ENCODE measurements at regions of chr3 and their contacts with region 1.

Region 1: GRCh38 chr3:77038468-77038929 is 1.4 kb upstream of the ROBO2 start:
- DNase-seq: peak; percentile 70
- H3K4me3 ChIP-seq: peak overlapping the region; percentile 64
- H3K27ac ChIP-seq: no peak overlapping the region
- H3K27me3 ChIP-seq: peaks cover 8% of the 10 kb centered on the region
- CTCF ChIP-seq: peak; percentile 76

Region 2: DNA sequence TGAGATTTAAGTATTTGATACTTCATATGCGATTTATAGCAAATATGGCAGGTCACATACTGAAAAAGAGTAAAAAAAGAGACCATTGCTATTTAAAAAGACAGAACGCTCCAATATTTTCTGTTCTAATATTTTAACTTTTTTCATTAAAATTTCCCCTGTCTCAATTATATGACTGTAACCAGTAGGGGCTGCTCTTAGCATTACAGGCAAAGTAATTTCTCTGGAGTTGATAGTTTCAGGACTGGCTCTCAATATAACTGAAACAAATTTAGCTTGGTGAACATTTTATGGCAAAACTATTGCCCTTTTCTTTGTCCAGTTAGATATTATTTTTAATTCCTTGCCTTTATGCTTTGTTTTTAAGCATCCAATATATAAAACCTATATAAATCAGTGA is 284.9 kb before region 1 on chr3:
- CTCF ChIA-PET with region 1: interaction called, 12 read pairs
- POLR2A ChIA-PET with region 1: no interaction called
- DNase-seq: no peak
- H3K4me3 ChIP-seq: no peak overlapping the region
- H3K27ac ChIP-seq: no peak overlapping the region
- H3K27me3 ChIP-seq: no peaks in the 10 kb centered on the region
- CTCF ChIP-seq: peak; percentile 62

Region 3: GRCh38 chr3:76900596-76900995 is 137.9 kb before region 1 on chr3:
- CTCF ChIA-PET with region 1: no interaction called
- POLR2A ChIA-PET with region 1: no interaction called
- DNase-seq: peak; percentile 2
- H3K4me3 ChIP-seq: no peak overlapping the region
- H3K27ac ChIP-seq: no peak overlapping the region
- H3K27me3 ChIP-seq: no peaks in the 10 kb centered on the region
- CTCF ChIP-seq: no peak

Region 4: DNA sequence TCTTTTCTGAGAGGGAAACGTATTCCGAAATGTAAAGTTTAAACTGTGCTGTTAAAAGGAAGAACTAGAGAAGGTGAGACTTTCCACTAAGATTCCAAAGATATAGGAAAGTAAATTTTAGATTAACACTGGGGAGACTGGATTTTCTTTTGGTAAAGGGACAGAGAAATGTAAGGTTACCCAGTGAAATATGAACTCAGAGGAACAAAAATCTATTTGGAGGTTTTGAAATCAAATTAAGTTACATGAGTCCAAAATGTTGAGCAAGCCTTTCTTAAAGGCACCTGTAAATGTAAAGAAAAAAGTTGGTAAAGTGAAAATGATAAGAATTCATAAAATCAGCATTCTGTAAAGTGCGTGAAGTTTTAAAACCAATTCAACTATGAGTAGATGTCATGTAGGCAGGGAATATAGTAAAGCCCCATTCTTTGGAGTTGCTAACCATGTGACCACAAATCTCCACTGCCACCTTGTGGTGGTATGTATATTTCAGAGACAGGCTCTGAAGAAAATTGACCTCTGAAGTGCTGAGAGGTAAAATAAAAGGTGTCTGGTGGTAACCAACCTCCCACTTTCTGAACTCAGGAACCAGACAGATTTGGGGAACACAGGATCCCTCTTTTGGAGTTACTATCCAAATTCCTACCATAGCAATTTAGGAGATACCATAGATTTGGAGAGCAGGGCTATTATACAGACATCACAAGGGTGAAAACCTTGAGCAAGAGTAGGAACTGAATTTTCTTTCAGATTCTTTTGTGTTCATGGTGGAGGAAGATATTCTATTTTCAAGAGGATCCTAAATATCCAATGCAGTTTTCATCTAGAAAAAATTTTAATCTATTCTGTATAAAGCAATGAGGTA is 216.7 kb after region 1 on chr3:
- CTCF ChIA-PET with region 1: interaction called, 27 read pairs
- POLR2A ChIA-PET with region 1: no interaction called
- DNase-seq: peak; percentile 37
- H3K4me3 ChIP-seq: no peak overlapping the region
- H3K27ac ChIP-seq: no peak overlapping the region
- H3K27me3 ChIP-seq: no peaks in the 10 kb centered on the region
- CTCF ChIP-seq: peak; percentile 74

Region 5: DNA sequence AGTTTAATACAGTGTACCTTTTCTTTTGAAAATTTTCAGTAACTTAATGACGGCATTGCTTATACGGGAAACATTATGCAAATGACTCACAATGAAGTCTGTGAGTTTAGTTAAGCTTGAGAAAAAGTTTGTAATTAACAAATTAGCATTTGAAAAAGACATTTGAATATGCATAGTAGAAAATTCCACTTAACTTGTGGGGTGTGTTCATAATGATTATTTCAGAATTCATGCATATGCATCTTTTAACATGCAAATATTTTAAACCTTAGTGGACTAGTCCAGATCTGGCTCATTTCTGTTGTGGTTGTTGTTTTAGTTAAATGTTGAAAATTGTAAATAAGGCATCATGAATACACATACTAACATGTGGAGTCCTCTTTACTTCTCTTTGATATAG is 240.8 kb after region 1 on chr3:
- CTCF ChIA-PET with region 1: no interaction called
- POLR2A ChIA-PET with region 1: no interaction called
- DNase-seq: no peak
- H3K4me3 ChIP-seq: no peak overlapping the region
- H3K27ac ChIP-seq: no peak overlapping the region
- H3K27me3 ChIP-seq: no peaks in the 10 kb centered on the region
- CTCF ChIP-seq: no peak